ENCODE measurements at regions of chr13 and their contacts with region 1.

Region 1: GRCh38 chr13:91946498-91947070 is 548.2 kb downstream of the GPC5 start:
- DNase-seq: peak; percentile 0
- H3K4me3 ChIP-seq: no peak overlapping the region
- H3K27ac ChIP-seq: no peak overlapping the region
- H3K4me1 ChIP-seq: no peaks in the 10 kb centered on the region
- H3K27me3 ChIP-seq: no peaks in the 10 kb centered on the region
- CTCF ChIP-seq: peak; percentile 20 to 59

Region 2: DNA sequence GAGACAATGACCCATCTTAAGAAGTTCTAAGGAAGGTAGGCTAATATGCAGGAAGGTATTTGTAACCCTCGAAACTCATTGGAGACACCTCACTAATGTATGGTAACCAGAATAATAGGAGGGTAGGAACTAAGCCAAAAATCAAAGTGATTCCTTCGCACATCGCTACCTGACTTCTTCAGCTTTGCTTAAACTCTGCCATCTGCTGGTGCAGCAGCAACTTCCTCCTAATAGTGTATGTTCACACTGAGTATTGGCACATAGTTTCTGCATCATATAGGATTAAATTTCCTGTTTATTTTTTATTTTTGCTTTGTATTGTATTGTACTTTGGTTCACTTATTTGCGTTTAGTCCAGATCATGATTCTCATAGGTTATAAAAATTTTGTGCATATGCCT is 128.1 kb after region 1 on chr13:
- CTCF ChIA-PET with region 1: no interaction called
- dilution Hi-C with region 1: no loop called
- in situ Hi-C with region 1: no loop called
- intact Hi-C with region 1: loop called (anchors 5 kb)
- DNase-seq: no peak
- H3K4me3 ChIP-seq: no peak overlapping the region
- H3K27ac ChIP-seq: no peak overlapping the region
- H3K4me1 ChIP-seq: no peaks in the 10 kb centered on the region
- H3K27me3 ChIP-seq: no peaks in the 10 kb centered on the region
- CTCF ChIP-seq: peak; percentile 12 to 41

Region 3: DNA sequence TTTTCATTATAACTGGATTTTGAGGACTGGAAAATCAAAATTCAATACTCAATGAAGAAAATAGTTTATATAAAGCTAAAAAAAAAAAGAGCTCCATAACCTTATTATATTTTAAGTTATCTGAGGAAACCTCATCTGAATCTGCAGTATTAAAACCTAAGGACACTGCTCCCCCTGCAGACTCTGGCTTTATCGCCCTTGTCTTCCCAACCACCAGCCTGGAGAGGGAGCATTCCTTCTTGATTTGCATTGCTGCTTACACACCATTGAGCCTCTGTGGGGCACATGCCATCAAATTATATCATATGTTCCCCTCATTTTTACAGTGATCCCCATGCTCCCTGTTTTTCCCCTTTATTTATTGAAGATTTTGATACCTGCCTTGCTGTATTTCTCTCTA is 408.6 kb after region 1 on chr13:
- CTCF ChIA-PET with region 1: no interaction called
- dilution Hi-C with region 1: no loop called
- in situ Hi-C with region 1: no loop called
- intact Hi-C with region 1: no loop called
- DNase-seq: no peak
- H3K4me3 ChIP-seq: no peak overlapping the region
- H3K27ac ChIP-seq: no peak overlapping the region
- H3K4me1 ChIP-seq: no peaks in the 10 kb centered on the region
- H3K27me3 ChIP-seq: no peaks in the 10 kb centered on the region
- CTCF ChIP-seq: peak in 1 of 2 donors; percentile 24

Measured in mammary epithelial cell (primary cell).